ENCODE measurements at regions of chr4 and their contacts with region 1.

Region 1: GRCh38 chr4:169612871-169613859 is 782 bp upstream of the NEK1 start:
- DNase-seq: peak; percentile 31 to 89 (median 51)
- ATAC-seq: peak; percentile 49
- H3K4me3 ChIP-seq: peak overlapping the region; percentile 80
- H3K27ac ChIP-seq: peak overlapping the region; percentile 64
- H3K4me1 ChIP-seq: peaks cover 11 to 27% of the 10 kb centered on the region in 2 experiments
- H3K27me3 ChIP-seq: no peaks in the 10 kb centered on the region
- CTCF ChIP-seq: peak; percentile 71 to 91 (median 83)
- EP300 ChIP-seq: no peak
- POLR2A ChIP-seq: no peak
- RAD21 ChIP-seq: peak; percentile 76

Region 2: GRCh38 chr4:168585168-168586091 is 1027.7 kb before region 1 on chr4:
- CTCF ChIA-PET with region 1: no interaction called
- POLR2A ChIA-PET with region 1: no interaction called
- in situ Hi-C with region 1: no loop called
- intact Hi-C with region 1: no loop called
- DNase-seq: peak; percentile 14 to 49 (median 28)
- ATAC-seq: peak; percentile 97
- H3K4me3 ChIP-seq: no peak overlapping the region
- H3K27ac ChIP-seq: no peak overlapping the region
- H3K4me1 ChIP-seq: no peaks in the 10 kb centered on the region
- H3K27me3 ChIP-seq: no peaks in the 10 kb centered on the region; a peak in 1 of 5 replicates
- CTCF ChIP-seq: peak; percentile 45 to 53 (median 47)
- EP300 ChIP-seq: no peak
- POLR2A ChIP-seq: no peak
- RAD21 ChIP-seq: peak; percentile 11 to 53; a peak in 2 of 4 replicates

Region 3: DNA sequence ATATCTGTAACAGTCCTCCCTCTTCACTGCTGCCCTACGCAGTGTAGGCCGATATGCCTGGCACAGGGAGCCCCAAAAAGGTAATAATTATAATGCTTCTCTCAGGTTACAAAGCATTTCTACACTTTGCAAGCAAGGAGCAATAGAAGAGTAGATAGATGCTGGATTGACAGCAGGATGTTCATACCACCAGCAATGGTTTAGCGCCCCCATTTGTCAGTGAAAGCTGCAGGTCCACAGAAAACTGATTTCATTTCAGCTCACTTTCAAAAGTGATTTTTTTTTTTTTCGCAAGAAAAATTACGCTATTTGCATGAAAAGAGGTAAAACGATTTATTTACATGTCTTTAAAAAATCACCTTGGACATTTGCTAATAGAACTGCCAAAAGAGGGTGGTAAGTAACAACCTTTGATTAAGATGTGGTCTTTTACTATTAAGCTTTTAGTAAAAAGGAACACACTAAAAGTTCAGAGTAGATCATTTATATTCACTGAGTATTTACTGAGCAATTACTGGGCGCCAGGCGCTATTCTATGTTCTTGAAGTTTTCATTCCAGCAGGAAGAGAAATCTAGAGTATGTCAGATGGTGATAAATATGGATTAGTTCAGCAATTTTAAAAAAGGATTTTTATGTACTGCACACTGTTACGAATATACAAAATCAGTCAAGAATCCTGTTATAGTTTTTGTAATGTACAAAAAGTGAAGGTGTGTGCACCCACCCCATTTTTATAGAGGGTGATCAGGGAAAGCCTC is 110.2 kb after region 1 on chr4:
- CTCF ChIA-PET with region 1: no interaction called
- POLR2A ChIA-PET with region 1: interaction called, 5 read pairs
- in situ Hi-C with region 1: no loop called
- intact Hi-C with region 1: loop called (anchors 1 kb)
- DNase-seq: peak in 2 of 4 experiments; percentile 27 to 40
- ATAC-seq: peak; percentile 69
- H3K4me3 ChIP-seq: no peak overlapping the region
- H3K27ac ChIP-seq: no peak overlapping the region
- H3K4me1 ChIP-seq: no peaks in the 10 kb centered on the region
- H3K27me3 ChIP-seq: no peaks in the 10 kb centered on the region
- CTCF ChIP-seq: peak in 2 of 3 experiments; percentile 32 to 63; a peak in 4 of 6 replicates
- EP300 ChIP-seq: no peak
- POLR2A ChIP-seq: no peak
- RAD21 ChIP-seq: peak; percentile 47 to 52

Region 4: GRCh38 chr4:169791527-169792156 is 178.5 kb after region 1 on chr4:
- CTCF ChIA-PET with region 1: no interaction called
- POLR2A ChIA-PET with region 1: no interaction called
- in situ Hi-C with region 1: no loop called
- intact Hi-C with region 1: loop called (anchors 1 kb)
- DNase-seq: peak; percentile 11 to 53 (median 27)
- ATAC-seq: peak; percentile 93
- H3K4me3 ChIP-seq: no peak overlapping the region
- H3K27ac ChIP-seq: no peak overlapping the region
- H3K4me1 ChIP-seq: peaks cover 0 to 4% of the 10 kb centered on the region in 2 experiments; a peak in 1 of 5 replicates
- H3K27me3 ChIP-seq: peaks cover 11 to 14% of the 10 kb centered on the region in 2 experiments; a peak in 4 of 5 replicates
- CTCF ChIP-seq: peak; percentile 49 to 57 (median 54); a peak in 5 of 6 replicates
- EP300 ChIP-seq: no peak
- POLR2A ChIP-seq: no peak
- RAD21 ChIP-seq: peak; percentile 11 to 44; a peak in 3 of 4 replicates

Region 5: DNA sequence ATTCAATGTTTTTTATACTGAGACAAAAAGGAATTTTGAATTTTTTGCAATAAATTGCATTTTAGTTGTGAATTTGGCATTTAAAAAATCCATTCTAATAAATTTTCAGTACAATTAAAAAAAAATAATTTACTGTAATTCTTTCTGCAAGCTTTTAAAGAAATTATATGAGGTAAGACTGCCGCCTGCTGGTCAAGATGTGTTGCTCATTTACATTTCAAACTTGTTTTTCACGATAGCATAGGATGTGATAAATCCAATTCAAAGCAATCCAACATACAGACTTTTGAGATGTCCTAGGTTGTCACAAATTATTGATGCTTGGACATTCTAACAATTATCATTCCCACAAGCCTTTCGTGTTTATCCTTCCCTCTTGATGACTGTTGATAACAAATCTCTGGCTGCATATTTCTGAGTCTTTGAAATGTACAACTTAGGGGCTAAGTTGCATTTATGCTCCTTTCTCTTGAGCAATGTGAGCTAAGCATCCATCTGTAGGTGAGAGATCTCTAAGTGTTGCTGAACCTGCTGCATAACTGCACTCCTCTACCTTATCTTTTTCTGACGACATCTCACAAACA is 434.7 kb after region 1 on chr4:
- CTCF ChIA-PET with region 1: interaction called, 7 read pairs
- POLR2A ChIA-PET with region 1: no interaction called
- in situ Hi-C with region 1: loop called (anchors 25 kb)
- intact Hi-C with region 1: loop called (anchors 1 kb)
- DNase-seq: peak; percentile 23 to 73 (median 26)
- ATAC-seq: peak; percentile 47; the same call in 1 of the 3 replicates
- H3K4me3 ChIP-seq: no peak overlapping the region
- H3K27ac ChIP-seq: no peak overlapping the region
- H3K4me1 ChIP-seq: no peaks in the 10 kb centered on the region
- H3K27me3 ChIP-seq: no peaks in the 10 kb centered on the region
- CTCF ChIP-seq: peak; percentile 49 to 87 (median 67); a peak in 5 of 6 replicates
- EP300 ChIP-seq: no peak
- POLR2A ChIP-seq: no peak
- RAD21 ChIP-seq: peak; percentile 82 to 90

Measured in K562 (cell line).